ENCODE measurements at regions of chr20 and their contacts with region 1.

Region 1: DNA sequence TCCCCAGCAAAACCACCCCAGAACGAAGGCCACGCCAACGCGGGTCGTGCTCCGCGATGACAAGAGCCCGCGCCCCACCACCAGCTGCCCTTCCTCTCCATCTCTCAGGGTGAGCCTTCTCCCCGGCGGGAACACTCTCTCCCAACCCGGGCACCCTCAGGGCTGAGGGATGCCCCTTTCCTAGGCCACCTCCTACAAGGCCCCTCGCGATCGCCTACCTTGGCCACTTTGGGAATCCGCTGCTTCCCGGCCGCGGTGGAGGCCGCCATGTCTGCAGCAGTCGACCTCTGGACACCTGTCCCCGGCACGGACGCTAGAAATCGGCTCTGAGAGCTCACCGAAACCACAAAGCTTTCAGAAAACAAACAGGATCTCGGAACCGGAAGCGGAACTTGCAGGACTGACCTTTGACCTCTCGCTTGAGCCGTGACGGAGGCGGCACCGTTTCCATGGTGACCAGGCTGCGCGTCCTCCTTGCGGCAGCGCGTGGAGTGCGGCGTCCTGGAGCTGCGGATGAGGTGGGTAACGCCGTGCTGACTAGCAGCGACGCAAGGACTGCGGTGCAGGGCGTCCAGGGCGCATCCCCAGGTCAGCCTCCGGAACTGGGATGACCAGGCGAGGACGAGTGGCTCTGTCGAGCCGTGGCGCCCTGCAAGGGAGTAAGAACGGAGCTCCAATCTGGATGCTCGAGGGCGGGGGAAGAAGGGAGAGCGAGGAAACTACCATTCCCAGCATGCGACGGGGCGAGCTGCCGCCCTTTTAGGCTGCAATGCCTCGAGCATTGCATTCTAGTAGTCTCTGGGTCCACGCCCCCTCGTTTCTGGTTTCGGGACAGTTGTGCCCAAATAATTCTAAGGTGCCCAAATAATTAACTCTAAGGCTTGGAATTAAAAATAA is at the starts of genes CFAP61 and CRNKL1:
- DNase-seq: peak; percentile 94
- ATAC-seq: peak; percentile 94
- H3K4me3 Mint-ChIP-seq: peak within 1 kb of the TSS; percentile 96
- H3K27ac Mint-ChIP-seq: peak within 1 kb of the TSS; percentile 93
- H3K4me1 Mint-ChIP-seq: peaks cover 26% of the 10 kb centered on the region
- H3K27me3 Mint-ChIP-seq: no peaks in the 10 kb centered on the region
- CTCF ChIP-seq: no peak
- total RNA-seq, gene CFAP61: not detected in 2 replicates
- total RNA-seq, gene CRNKL1: 21.3 and 22.3 TPM in 2 replicates

Region 2: DNA sequence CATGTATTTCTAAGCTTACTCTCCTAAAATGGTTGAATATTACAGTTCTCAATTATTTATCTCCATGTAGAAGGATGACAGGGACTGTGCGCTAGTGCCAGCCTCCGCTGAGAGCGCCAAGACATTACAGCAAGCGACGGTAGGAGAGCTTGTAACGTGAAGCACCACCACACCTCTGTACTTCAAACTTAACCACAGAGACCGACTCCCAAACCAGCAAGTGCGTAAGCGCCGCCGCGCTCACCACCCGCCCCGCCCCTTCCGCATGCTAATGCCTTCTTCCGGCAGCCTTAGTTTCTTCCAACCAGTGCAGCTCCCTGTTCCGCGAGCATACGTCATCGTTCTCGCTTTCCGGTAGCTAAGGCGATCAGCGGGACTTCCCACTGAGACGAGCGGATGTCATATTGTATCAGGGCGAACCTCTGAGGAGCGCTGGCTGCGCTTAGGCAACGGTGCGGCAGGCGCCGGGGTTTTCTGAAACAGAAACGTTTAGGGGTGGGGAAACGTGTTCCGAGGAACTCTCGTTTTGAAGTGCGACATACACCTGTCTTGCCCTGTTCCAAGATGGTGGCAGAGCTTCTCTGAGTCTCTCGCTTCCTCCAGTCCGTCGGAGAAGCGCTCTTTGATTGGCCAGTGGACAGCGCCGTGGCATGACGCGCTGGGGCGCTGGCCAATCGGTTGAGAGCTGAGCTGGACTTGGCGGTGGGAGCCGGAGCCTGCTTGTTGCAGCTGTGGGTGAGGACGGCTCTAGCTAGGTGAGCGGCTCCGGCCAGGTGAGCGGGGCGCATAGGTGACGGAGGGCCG is 1544.9 kb before region 1 on chr20 and contains the start of gene SEC23B:
- CTCF ChIA-PET with region 1: no interaction called
- POLR2A ChIA-PET with region 1: interaction called, 9 read pairs
- intact Hi-C with region 1: loop called (anchors 1 kb)
- DNase-seq: peak; percentile 92
- ATAC-seq: peak; percentile 92
- H3K4me3 Mint-ChIP-seq: peak within 1 kb of the TSS; percentile 100
- H3K27ac Mint-ChIP-seq: peak within 1 kb of the TSS; percentile 100
- H3K4me1 Mint-ChIP-seq: peaks cover 36% of the 10 kb centered on the region
- H3K27me3 Mint-ChIP-seq: peaks cover 2% of the 10 kb centered on the region
- CTCF ChIP-seq: no peak
- total RNA-seq, gene SEC23B: 52.0 and 56.6 TPM in 2 replicates

Region 3: GRCh38 chr20:19314621-19315020 is 737.7 kb before region 1 on chr20:
- CTCF ChIA-PET with region 1: no interaction called
- POLR2A ChIA-PET with region 1: no interaction called
- intact Hi-C with region 1: no loop called
- DNase-seq: no peak
- ATAC-seq: no peak
- H3K4me3 Mint-ChIP-seq: no peak overlapping the region
- H3K27ac Mint-ChIP-seq: no peak overlapping the region
- H3K4me1 Mint-ChIP-seq: no peaks in the 10 kb centered on the region
- H3K27me3 Mint-ChIP-seq: peaks cover 8% of the 10 kb centered on the region
- CTCF ChIP-seq: no peak

Region 4: DNA sequence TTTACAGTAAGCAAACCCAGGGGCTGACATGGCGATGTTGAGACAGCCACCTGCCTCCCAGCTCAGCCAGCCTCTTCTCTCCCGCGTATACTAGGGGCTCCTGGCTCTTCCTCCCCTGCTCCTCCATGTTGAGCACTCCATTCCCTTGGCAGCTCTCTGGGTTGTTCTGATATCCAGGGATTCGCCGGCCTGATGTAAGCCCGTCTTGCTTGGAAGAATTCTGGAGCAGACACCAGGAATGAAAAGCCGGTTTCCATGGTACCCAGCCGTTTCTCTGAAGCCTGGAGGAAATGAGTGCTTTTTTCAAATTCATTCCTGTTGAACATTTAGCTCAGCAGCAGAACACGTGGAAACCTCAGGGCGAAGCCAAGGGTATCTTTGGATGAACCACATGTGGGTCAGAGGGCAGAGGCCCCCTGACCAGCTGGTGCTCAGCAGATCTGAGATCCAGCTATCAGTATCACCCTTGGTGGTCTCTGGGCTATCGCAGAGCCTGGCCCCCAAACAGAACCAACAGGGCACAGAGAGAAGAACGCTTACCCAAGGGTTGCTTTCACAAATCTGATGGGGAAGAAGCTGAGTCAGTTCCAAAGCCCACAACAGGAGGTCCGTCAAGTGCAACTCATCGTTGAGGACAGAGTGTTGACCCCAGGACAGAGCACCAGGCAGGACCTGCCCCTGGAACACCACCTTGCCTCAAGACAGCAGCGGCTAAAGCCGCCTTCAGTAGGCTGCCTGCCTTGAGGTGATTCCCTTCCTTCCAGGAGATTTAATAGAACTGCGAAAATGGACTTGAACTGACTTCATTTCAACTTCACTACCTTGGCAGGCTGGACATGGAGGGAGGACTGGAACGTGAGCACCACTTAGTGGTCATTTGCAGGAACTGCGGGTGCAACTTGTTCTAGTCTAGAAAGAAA is 390.3 kb before region 1 on chr20:
- CTCF ChIA-PET with region 1: no interaction called
- POLR2A ChIA-PET with region 1: interaction called, 3 read pairs
- intact Hi-C with region 1: loop called (anchors 1 kb)
- DNase-seq: peak; percentile 28
- ATAC-seq: peak; percentile 38
- H3K4me3 Mint-ChIP-seq: no peak overlapping the region
- H3K27ac Mint-ChIP-seq: no peak overlapping the region
- H3K4me1 Mint-ChIP-seq: peaks cover 32% of the 10 kb centered on the region
- H3K27me3 Mint-ChIP-seq: peaks cover 21% of the 10 kb centered on the region
- CTCF ChIP-seq: peak; percentile 99

Region 5: GRCh38 chr20:20017001-20017843 is 35.1 kb before region 1 on chr20 and contains the start of gene NAA20:
- CTCF ChIA-PET with region 1: interaction called, 6 read pairs
- POLR2A ChIA-PET with region 1: interaction called, 29 read pairs
- intact Hi-C with region 1: loop called (anchors 1 kb)
- DNase-seq: peak; percentile 83
- ATAC-seq: peak; percentile 99
- H3K4me3 Mint-ChIP-seq: peak within 1 kb of the TSS; percentile 91
- H3K27ac Mint-ChIP-seq: peak within 1 kb of the TSS; percentile 90
- H3K4me1 Mint-ChIP-seq: peaks cover 41% of the 10 kb centered on the region
- H3K27me3 Mint-ChIP-seq: no peaks in the 10 kb centered on the region
- CTCF ChIP-seq: no peak
- total RNA-seq, gene NAA20: 44.8 and 47.6 TPM in 2 replicates

Region 6: DNA sequence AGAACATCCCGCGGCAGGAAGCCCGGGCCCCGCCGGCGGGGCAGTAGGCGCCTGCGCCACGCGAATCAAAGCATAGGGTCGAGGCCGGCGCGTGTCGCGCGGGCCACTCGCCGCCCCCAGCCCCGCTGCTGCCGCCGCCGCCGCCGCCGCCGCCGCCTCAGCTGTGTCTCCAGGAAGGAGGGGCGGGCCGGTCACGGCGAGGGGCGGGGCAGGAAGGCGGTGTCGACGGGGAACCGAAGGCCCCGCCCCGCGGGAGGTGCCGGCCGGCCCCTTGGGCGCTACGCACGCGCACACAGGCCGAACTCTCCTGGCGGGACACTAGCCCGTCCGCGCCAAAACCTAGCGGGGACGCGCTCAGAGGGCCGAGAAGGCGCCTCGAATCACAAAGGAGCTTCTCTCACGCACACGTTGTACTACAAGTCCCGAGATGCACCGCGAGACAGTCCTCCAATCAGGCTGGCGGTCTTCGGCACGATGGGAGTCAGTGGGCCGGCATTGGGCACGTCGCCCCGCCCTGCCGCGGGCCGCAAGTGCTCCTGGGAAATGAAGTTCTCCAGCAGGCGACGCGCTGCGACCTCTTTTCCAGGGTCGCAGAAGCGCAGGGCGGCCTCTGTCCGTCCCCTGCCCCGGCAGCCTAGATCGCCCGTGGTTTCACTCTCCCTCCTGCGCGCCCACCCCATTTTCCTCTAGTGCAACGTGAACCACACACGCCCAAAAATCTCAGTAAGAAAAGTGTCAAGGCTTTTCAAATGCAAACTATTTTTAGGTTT is 660.3 kb after region 1 on chr20 and contains the start of gene RALGAPA2:
- CTCF ChIA-PET with region 1: no interaction called
- POLR2A ChIA-PET with region 1: interaction called, 7 read pairs
- intact Hi-C with region 1: loop called (anchors 1 kb)
- DNase-seq: peak; percentile 97
- ATAC-seq: peak; percentile 96
- H3K4me3 Mint-ChIP-seq: peak within 1 kb of the TSS; percentile 90
- H3K27ac Mint-ChIP-seq: peak within 1 kb of the TSS; percentile 92
- H3K4me1 Mint-ChIP-seq: peaks cover 26% of the 10 kb centered on the region
- H3K27me3 Mint-ChIP-seq: no peaks in the 10 kb centered on the region
- CTCF ChIP-seq: no peak
- total RNA-seq, gene RALGAPA2: 16.5 and 19.2 TPM in 2 replicates

Region 7: GRCh38 chr20:21125849-21126580 is 1073.7 kb after region 1 on chr20 and contains the start of gene KIZ:
- CTCF ChIA-PET with region 1: no interaction called
- POLR2A ChIA-PET with region 1: no interaction called
- intact Hi-C with region 1: loop called (anchors 2 kb)
- DNase-seq: peak; percentile 100
- ATAC-seq: peak; percentile 96
- H3K4me3 Mint-ChIP-seq: peak within 1 kb of the TSS; percentile 87
- H3K27ac Mint-ChIP-seq: peak within 1 kb of the TSS; percentile 44
- H3K4me1 Mint-ChIP-seq: peaks cover 10% of the 10 kb centered on the region
- H3K27me3 Mint-ChIP-seq: peaks cover 6% of the 10 kb centered on the region
- CTCF ChIP-seq: no peak
- total RNA-seq, gene KIZ: 15.8 and 18.0 TPM in 2 replicates

Measured in activated B cell treated with CpG ODN at 0.5 μM for 24 hours (primary cell).